ENCODE measurements at regions of chr5 and their contacts with region 1.

Region 1: DNA sequence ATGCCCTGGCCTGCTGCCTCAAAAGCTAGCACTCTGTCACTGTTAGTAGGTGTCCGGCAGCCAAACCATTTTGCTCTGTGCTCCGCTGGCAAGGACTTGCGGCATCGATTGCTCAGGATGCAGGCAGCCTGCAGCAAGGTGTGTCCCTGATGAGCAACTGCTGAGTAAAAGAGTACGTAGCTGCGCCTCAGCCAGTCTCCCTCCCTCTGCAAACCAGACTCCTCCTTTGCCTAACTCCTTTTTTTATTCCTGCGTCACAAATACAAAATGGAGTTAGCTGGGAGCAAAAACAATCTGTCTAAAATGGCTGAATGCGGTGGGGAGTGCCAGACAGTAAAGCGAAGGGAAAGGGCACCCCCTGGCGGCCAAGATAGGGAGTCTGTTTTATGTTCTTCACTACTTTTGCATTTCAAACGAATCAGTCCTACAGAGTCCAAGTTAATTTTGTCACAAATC is 61.1 kb downstream of the DIAPH1 start:
- DNase-seq: peak; percentile 78 to 98 (median 84)

Region 2: DNA sequence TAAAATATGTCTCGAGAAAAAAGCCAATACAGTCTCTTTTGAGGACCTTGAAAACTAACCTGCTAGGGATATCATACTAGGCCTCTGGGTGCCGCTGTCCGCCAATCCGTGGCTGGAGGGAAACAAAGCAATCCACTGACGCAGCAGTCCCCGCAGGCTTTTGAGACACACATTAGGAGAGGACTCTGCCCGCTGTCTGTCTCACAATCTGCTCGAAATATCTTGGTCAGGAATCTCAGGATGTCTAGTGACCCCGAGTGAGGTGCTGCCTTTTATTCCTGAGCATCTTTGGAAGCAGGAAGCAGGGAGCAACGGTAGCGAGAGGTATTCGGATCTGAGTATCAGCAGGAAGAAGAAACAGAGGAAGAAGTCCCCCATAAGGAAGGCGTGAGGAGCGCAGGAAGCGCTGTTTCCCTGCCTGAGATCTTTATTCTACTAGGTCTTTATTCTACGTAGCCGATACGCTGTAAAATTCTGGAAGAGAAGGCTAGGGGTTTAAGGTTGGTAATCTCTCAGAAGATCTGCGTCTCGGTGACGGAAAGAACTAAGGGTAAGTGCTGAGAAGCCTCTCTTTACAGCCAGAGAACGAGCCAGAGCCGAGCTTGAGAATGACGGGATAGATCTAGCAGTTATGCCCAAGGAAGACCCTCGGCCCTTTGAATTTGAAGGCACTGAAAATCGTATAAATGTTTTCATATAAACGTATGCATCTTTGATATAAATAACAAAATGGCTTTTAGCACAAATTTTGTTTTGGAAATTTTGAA is 231.4 kb before region 1 on chr5:
- intact Hi-C with region 1: loop called (anchors 2 kb)
- DNase-seq: peak; percentile 22 to 95 (median 72)

Region 3: DNA sequence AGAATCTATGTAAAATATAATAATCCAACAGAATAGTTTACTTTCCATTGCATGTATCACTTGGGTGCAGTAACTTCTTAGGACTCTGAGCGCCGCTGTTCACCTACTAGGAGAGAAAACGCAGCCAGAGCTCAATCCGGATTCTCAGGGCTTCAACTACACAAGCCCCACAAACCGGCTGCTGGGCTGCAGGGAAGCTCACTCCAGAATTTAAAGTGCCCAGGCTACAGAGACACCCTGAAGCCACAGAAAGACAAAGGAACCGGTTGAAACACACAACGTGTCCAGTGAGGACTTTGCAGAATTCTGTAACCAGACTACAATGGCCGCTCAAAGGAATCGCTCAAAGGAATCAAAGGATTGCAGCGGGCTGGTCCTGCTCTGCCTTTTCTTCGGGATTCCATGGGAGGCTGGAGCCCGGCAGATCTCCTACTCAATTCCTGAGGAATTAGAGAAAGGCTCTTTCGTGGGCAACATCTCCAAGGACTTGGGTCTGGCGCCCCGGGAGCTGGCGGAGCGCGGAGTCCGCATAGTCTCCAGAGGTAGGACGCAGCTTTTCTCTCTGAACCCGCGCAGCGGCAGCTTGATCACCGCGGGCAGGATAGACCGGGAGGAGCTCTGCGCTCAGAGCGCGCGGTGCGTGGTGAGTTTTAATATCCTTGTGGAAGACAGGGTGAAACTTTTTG is 144.7 kb before region 1 on chr5 and contains the start of gene PCDHGA10:
- intact Hi-C with region 1: loop called (anchors 2 kb)
- DNase-seq: peak in 3 of 10 donors; percentile 6 to 75 (median 73)

Region 4: GRCh38 chr5:141524604-141525597 is 32.8 kb before region 1 on chr5:
- intact Hi-C with region 1: loop called (anchors 2 kb)
- DNase-seq: peak; percentile 67 to 97 (median 80)

Measured in posterior cingulate gyrus (tissue), 11 donors.